ENCODE measurements at regions of chr6 and their contacts with region 1.

Region 1: GRCh38 chr6:31769684-31770371 is 7.3 kb downstream of the VWA7 start:
- DNase-seq: peak; percentile 63 to 96
- H3K4me3 ChIP-seq: no peak overlapping the region
- H3K27ac ChIP-seq: no peak overlapping the region
- H3K4me1 ChIP-seq: peaks cover 0 to 5% (median under 1%) of the 10 kb centered on the region in 4 experiments; a peak in 4 of 7 replicates
- H3K27me3 ChIP-seq: no peaks in the 10 kb centered on the region
- CTCF ChIP-seq: peak in 2 of 3 experiments; percentile 85 to 95; a peak in 3 of 4 replicates
- EP300 ChIP-seq: no peak
- POLR2A ChIP-seq: no peak
- RAD21 ChIP-seq: peak; percentile 73 to 75

Region 2: DNA sequence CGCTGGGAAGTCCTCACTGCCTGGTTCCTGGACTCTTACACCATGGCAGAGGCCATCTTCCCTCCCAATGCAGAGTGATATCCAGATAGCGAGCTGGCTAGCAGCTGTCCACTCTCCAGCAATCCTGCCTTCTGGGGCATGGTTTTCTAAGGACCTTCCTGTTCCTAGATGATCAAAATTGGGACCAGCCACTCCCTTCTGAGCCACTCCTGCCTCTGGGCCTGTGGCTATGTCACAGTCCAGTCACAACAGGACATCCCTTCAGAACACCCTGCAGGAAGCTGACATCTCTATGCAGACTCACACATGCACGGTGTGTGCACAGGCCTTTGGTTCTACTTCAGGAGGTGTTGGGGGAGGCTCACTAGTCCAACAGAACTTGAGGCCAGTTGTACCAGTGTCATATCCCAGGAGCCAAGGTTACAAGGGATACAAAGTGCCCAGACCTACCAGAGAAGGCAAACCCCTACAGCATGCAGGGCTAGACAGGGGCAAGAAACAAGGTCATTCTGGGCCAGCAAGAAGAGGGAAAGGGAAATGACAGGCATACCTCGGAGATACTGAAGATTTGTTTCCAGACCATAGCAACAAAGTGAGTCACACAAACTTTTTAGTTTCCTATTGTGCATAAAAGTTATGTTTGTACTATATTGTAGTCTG is 243.8 kb before region 1 on chr6:
- CTCF ChIA-PET with region 1: no interaction called
- POLR2A ChIA-PET with region 1: no interaction called
- DNase-seq: no peak
- H3K4me3 ChIP-seq: no peak overlapping the region
- H3K27ac ChIP-seq: no peak overlapping the region; the same call in 1 of the 2 replicates
- H3K4me1 ChIP-seq: peaks cover 0 to 5% (median 3%) of the 10 kb centered on the region in 4 experiments; a peak in 3 of 7 replicates
- H3K27me3 ChIP-seq: no peaks in the 10 kb centered on the region
- CTCF ChIP-seq: no peak
- EP300 ChIP-seq: no peak
- POLR2A ChIP-seq: no peak
- RAD21 ChIP-seq: no peak

Region 3: DNA sequence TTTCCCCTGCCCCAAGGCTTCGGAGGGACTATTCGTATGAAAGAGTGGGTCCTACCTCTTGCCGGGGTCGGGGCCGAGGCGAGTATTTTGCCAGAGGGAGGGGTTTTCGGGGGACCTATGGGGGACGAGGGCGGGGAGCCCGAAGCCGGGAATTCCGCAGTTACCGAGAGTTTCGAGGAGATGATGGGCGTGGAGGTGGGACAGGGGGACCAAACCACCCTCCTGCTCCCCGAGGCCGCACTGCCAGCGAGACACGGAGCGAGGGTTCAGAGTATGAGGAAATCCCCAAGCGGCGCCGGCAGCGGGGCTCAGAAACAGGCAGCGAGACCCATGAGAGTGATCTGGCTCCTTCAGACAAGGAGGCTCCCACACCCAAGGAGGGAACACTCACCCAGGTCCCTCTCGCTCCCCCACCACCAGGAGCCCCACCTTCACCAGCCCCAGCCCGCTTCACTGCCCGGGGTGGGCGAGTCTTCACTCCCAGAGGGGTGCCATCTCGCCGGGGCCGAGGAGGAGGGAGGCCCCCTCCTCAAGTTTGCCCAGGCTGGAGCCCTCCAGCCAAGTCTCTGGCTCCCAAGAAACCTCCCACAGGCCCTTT is 138.0 kb before region 1 on chr6:
- CTCF ChIA-PET with region 1: no interaction called
- POLR2A ChIA-PET with region 1: no interaction called
- DNase-seq: no peak
- H3K4me3 ChIP-seq: no peak overlapping the region
- H3K27ac ChIP-seq: no peak overlapping the region
- H3K4me1 ChIP-seq: no peaks in the 10 kb centered on the region
- H3K27me3 ChIP-seq: no peaks in the 10 kb centered on the region
- CTCF ChIP-seq: no peak
- EP300 ChIP-seq: no peak
- POLR2A ChIP-seq: peak in 1 of 2 experiments; percentile 5; a peak in 1 of 3 replicates
- RAD21 ChIP-seq: no peak

Region 4: DNA sequence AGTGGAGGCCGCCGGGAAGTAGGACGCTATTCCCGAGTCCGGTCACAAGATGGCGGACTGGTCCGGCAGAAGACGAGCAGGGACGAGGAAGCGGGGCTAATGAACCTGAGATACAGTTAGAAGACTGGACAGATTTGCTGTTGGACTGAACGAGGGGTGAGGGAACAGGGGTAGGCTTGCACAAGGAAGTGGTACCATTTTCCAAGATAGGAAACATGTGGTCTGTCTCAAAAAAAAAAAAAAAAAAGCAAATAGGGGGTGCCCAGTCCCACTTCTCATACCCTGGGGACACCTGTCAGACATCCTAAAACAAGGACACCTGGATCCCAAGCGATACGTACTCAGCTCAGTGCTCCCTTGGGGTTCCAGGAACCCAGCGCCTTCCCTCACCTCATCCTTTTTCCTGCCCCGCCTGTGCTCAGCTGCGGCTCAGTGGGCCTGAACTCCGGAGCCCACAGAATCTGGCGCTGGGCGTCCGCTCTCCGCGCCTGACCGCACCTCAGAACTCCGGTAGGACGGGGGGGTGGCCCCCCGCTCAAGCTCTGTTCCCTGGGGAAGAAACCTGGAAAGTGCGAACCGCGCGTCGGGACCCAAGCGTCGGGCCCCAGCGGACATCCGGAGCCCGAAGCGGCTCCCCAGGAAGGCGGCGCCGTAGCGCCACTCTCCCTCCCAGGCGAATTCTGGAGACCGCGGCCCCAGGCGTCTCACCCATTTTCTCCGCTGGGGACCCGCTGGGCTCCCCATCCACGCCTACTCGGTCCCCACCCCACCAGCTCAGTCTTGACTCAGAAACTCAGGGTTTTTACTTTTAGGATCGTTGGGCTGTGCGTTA is 88.8 kb before region 1 on chr6 and contains the start of gene LY6G5C:
- CTCF ChIA-PET with region 1: interaction called, 12 read pairs
- POLR2A ChIA-PET with region 1: no interaction called
- DNase-seq: peak in 1 of 2 experiments; percentile 79
- H3K4me3 ChIP-seq: peak within 1 kb of the TSS; percentile 22 to 70 (median 60)
- H3K27ac ChIP-seq: no peak within 1 kb of the TSS
- H3K4me1 ChIP-seq: peaks cover 0 to 10% (median 7%) of the 10 kb centered on the region in 4 experiments; a peak in 5 of 7 replicates
- H3K27me3 ChIP-seq: peaks cover 3 to 13% (median 12%) of the 10 kb centered on the region in 4 experiments; a peak in 6 of 7 replicates
- CTCF ChIP-seq: peak; percentile 78 to 85 (median 83)
- EP300 ChIP-seq: no peak
- POLR2A ChIP-seq: no peak
- RAD21 ChIP-seq: peak; percentile 90 to 96
- total RNA-seq, gene LY6G5C: 1.1 and 1.2 TPM in 2 replicates

Region 5: DNA sequence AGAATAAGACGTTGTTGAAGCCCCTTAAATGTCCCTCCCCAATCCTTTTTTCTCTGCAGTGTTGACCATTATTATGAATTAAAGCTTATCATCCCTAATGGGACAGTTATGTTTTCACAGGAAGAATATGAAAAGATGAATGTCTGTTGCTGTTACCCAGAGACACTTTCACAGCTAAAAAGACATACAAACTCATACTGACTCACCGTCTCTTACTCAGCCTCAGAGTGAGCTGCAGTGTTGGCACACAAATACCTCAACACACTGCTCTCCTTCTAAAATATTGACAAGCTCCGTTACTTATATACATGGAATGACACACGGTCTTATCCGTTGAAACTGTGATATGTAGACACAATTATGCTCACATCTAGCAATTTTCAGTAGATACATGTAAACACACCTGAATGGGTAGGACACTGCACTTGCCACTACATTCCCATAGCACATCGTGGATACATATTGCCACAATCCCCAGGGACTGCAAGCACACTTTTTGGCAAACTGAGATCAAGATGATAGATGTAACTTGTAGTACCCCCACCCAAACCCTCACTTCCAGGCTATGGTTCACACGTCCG is 17.0 kb before region 1 on chr6:
- CTCF ChIA-PET with region 1: interaction called, 25 read pairs
- POLR2A ChIA-PET with region 1: interaction called, 9 read pairs
- DNase-seq: no peak
- H3K4me3 ChIP-seq: no peak overlapping the region
- H3K27ac ChIP-seq: no peak overlapping the region
- H3K4me1 ChIP-seq: no peaks in the 10 kb centered on the region
- H3K27me3 ChIP-seq: no peaks in the 10 kb centered on the region
- CTCF ChIP-seq: no peak
- EP300 ChIP-seq: no peak
- POLR2A ChIP-seq: no peak
- RAD21 ChIP-seq: no peak

Region 6: GRCh38 chr6:31758281-31758680 is 11.5 kb before region 1 on chr6:
- CTCF ChIA-PET with region 1: interaction called, 25 read pairs
- POLR2A ChIA-PET with region 1: interaction called, 9 read pairs
- DNase-seq: no peak
- H3K4me3 ChIP-seq: no peak overlapping the region
- H3K27ac ChIP-seq: no peak overlapping the region
- H3K4me1 ChIP-seq: peaks cover 0 to 2% (median 0%) of the 10 kb centered on the region in 4 experiments; a peak in 2 of 7 replicates
- H3K27me3 ChIP-seq: no peaks in the 10 kb centered on the region
- CTCF ChIP-seq: no peak
- EP300 ChIP-seq: no peak
- POLR2A ChIP-seq: no peak
- RAD21 ChIP-seq: no peak

Region 7: DNA sequence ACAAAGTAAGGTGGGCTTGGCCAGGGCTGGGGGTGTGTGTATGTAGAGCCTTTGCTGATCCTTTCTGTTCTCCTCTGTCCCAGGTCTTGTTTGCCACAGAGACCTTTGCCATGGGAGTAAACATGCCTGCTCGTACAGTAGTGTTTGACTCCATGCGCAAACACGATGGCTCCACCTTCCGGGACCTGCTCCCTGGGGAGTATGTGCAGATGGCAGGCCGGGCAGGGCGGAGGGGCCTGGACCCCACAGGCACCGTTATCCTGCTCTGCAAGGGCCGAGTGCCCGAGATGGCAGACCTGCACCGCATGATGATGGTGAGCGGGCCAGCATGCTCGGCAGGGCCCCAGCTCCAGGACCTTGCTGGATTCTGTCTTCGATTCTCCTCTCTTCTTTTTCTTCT is 195.9 kb after region 1 on chr6:
- CTCF ChIA-PET with region 1: no interaction called
- POLR2A ChIA-PET with region 1: no interaction called
- DNase-seq: no peak
- H3K4me3 ChIP-seq: no peak overlapping the region
- H3K27ac ChIP-seq: no peak overlapping the region
- H3K4me1 ChIP-seq: no peaks in the 10 kb centered on the region
- H3K27me3 ChIP-seq: no peaks in the 10 kb centered on the region
- CTCF ChIP-seq: no peak
- EP300 ChIP-seq: no peak
- POLR2A ChIP-seq: no peak
- RAD21 ChIP-seq: no peak

Region 8: DNA sequence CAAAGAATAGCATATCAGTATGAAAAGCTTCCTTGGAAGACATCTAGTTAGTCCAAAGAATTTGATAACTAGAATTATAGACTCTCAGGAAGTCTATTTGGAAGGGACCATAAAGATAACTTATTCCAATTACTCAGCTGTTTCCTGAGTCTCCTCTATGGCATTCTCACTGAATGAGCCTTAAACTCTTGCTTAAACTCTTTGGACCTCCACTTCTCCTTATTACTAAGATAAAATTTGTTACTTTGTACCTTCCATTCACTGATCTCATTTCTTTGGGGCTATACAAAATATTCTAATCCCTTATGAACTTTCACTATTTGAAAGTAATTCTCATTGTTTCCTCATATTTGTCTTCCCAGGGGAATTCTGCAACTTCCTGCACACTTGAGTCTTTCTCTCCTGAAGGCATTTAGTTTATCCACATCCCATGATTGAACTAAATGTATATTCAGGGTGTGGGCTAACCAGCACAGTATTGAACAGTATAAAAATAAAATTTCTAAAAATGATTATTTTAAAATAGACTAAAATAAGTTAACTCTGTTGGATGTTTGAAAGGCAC is 521.1 kb after region 1 on chr6:
- CTCF ChIA-PET with region 1: no interaction called
- POLR2A ChIA-PET with region 1: no interaction called
- DNase-seq: no peak
- H3K4me3 ChIP-seq: no peak overlapping the region
- H3K27ac ChIP-seq: no peak overlapping the region
- H3K4me1 ChIP-seq: no peaks in the 10 kb centered on the region
- H3K27me3 ChIP-seq: no peaks in the 10 kb centered on the region
- CTCF ChIP-seq: no peak
- EP300 ChIP-seq: no peak
- POLR2A ChIP-seq: no peak
- RAD21 ChIP-seq: no peak

Measured in H1 (cell line).